OCI-LY7 (cell line): ENCODE measurements at regions of chr7 and their contacts with region 1.

Region 1: GRCh38 chr7:87564289-87564963 is 36.3 kb downstream of the ABCB1 start:
- DNase-seq: peak; percentile 37
- H3K4me3 ChIP-seq: no peak overlapping the region
- H3K27ac ChIP-seq: no peak overlapping the region
- H3K4me1 ChIP-seq: no peaks in the 10 kb centered on the region
- CTCF ChIP-seq: peak; percentile 73

Region 2: DNA sequence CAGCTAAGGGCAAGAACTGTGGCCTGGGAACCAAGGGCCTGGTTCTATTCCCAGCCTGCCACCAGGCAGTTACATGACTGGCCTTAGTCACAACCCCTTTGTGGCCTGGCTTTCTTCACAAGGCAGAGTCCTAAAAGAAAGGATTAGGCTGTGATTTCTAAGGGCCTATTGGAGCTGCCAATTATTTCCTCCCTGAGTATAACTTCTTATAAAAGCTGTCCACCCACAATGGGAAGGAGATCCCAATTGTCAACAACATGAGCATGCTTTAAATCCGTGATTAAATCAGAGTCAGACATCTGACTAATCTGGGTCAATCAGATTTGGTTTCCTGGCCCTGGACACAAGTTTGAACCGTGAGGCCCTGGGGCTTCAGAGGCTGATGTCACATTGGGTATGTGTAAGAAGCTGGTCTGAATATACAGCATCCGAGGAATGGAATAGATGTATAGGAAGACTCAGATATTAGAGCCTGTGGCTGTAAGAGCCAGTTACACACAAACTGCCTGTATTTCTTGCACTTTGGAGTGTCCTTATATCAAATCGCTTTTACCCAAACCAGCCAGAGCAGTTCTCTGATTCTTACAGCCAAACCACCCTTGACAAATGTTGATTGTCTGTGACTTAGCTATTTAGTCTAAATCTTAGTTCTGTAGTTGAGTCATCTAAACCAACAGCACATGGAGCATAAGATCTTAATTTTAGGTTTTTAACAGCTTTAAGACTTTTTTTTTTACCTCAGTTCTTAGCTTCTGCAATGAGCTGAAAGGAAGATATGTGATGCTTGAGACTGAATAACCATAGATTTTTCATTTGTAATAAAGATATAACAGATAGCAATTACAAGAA is 150.3 kb before region 1 on chr7:
- CTCF ChIA-PET with region 1: no interaction called
- POLR2A ChIA-PET with region 1: no interaction called
- intact Hi-C with region 1: no loop called
- DNase-seq: no peak
- H3K4me3 ChIP-seq: no peak overlapping the region
- H3K27ac ChIP-seq: no peak overlapping the region
- H3K4me1 ChIP-seq: no peaks in the 10 kb centered on the region
- CTCF ChIP-seq: no peak

Region 3: DNA sequence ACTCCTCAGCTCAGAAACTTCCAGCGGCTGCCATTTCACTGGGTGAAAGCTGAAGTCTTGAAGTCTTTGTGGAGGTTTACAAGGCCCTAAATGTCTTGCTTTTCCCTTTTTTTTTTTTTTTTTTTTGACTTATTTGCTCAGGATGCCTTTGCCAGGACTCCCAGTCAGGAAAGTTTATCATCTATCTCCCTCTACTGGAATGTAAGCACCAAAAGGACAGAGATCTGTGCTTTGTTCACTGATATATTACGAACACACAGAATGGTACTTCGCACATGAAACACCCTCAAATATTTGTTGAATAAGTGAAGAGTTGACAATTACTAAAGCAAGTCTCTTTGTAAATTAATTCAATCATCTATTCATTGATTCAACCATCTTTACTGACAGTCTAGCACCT is 112.2 kb before region 1 on chr7:
- CTCF ChIA-PET with region 1: no interaction called
- POLR2A ChIA-PET with region 1: no interaction called
- intact Hi-C with region 1: loop called (anchors 5 kb)
- DNase-seq: no peak
- H3K4me3 ChIP-seq: no peak overlapping the region
- H3K27ac ChIP-seq: no peak overlapping the region
- H3K4me1 ChIP-seq: no peaks in the 10 kb centered on the region
- CTCF ChIP-seq: no peak

Region 4: DNA sequence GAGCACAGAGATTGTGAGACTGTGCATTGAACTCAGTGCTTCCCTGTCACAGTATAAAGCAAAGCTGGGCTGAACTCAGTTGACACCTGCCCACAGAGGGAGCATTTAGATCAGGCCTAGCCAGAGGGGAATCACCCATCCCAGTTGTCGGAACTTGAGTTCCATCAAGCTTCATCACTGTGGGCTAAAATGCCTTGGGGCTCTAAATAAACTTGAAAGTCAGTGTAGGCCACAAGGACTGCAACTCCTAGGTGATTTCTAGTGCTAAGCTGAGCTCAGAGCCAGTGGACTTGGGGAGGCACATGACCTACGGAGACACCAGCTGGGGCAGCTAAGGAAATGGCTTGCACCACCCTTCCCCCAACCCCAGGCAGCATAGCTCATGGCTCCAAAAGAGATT is 81.3 kb before region 1 on chr7:
- CTCF ChIA-PET with region 1: no interaction called
- POLR2A ChIA-PET with region 1: no interaction called
- intact Hi-C with region 1: no loop called
- DNase-seq: no peak
- H3K4me3 ChIP-seq: no peak overlapping the region
- H3K27ac ChIP-seq: no peak overlapping the region
- H3K4me1 ChIP-seq: no peaks in the 10 kb centered on the region
- CTCF ChIP-seq: no peak